ENCODE measurements at regions of chr11 and their contacts with region 1.

Region 1: GRCh38 chr11:447923-448731 is 2.0 kb upstream of the PTDSS2 start:
- DNase-seq: peak; percentile 94 to 97
- ATAC-seq: peak; percentile 87 to 92 (median 89)
- H3K4me3 ChIP-seq: peak overlapping the region; percentile 39 to 75 (median 64)
- H3K27ac ChIP-seq: peak overlapping the region; percentile 85 to 96 (median 91)
- H3K4me1 ChIP-seq: peaks cover 20 to 46% (median 34%) of the 10 kb centered on the region in 9 donors
- H3K27me3 ChIP-seq: peaks cover 0 to 3% (median 0%) of the 10 kb centered on the region in 7 donors
- CTCF ChIP-seq: peak; percentile 62 to 97 (median 84)

Region 2: GRCh38 chr11:313787-314547 is 134.2 kb before region 1 on chr11 and contains the start of gene IFITM1:
- intact Hi-C with region 1: no loop called
- DNase-seq: peak; percentile 22 to 65
- ATAC-seq: peak; percentile 5 to 51 (median 29)
- H3K4me3 ChIP-seq: peak within 1 kb of the TSS; percentile 55 to 85 (median 75)
- H3K27ac ChIP-seq: peak within 1 kb of the TSS; percentile 83 to 99 (median 94)
- H3K4me1 ChIP-seq: peaks cover 6 to 60% (median 40%) of the 10 kb centered on the region in 9 donors
- H3K27me3 ChIP-seq: peaks cover 0 to 25% (median 12%) of the 10 kb centered on the region in 7 donors
- CTCF ChIP-seq: no peak
- total RNA-seq, gene IFITM1: 51.6 to 182 (median 94.9) TPM

Region 3: DNA sequence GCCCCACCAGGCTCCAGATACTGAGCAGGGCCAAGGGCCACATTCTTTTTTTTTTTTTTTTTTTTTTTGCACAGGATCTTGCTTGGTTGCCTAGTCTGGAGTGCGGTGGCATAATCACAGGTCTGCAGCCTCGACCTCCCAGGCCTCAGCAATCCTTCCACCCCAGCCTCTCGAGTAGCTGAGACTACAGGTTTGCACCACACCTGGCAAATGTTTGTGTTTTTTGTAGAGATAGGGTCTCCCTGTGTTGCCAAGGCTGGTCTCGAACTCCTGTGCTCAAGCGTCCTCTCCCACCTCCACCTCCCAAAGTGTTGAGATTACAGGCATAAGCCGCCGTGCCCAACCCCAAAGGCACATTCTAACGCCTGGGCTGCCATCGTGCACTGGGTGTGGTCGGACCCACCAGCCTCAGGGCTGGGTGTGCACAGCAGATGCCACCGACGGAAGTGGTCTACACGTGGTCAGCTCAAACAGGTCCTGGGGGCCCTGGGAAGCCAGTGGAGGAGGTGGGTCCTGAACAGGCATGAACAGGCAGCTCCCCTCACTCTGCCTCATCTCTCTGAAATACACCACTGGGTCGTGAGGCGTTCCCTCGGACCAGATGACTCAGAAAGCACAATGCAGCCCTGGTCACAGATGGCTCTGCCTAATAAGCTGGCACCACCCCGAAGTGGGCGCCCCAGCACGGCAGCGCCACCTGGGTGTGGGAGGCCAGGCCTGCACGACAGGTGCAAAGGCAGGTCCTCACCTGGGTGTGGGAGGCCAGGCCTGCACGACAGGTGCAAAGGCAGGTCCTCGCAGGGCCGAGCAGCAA is 84.0 kb before region 1 on chr11:
- intact Hi-C with region 1: loop called in 1 of 10 experiments (anchors 10 kb)
- DNase-seq: no peak
- ATAC-seq: peak in 4 of 8 donors; percentile 25 to 57 (median 38)
- H3K4me3 ChIP-seq: no peak overlapping the region
- H3K27ac ChIP-seq: no peak overlapping the region
- H3K4me1 ChIP-seq: peaks cover 0 to 10% (median 8%) of the 10 kb centered on the region in 9 donors
- H3K27me3 ChIP-seq: peaks cover 8 to 52% (median 50%) of the 10 kb centered on the region in 7 donors
- CTCF ChIP-seq: peak in 3 of 9 donors; percentile 4 to 39 (median 12)

Region 4: GRCh38 chr11:382081-382629 is 66.0 kb before region 1 on chr11:
- intact Hi-C with region 1: no loop called
- DNase-seq: no peak
- ATAC-seq: no peak
- H3K4me3 ChIP-seq: no peak overlapping the region
- H3K27ac ChIP-seq: no peak overlapping the region
- H3K4me1 ChIP-seq: no peaks in the 10 kb centered on the region
- H3K27me3 ChIP-seq: peaks cover 0 to 56% (median 8%) of the 10 kb centered on the region in 7 donors
- CTCF ChIP-seq: no peak

Region 5: DNA sequence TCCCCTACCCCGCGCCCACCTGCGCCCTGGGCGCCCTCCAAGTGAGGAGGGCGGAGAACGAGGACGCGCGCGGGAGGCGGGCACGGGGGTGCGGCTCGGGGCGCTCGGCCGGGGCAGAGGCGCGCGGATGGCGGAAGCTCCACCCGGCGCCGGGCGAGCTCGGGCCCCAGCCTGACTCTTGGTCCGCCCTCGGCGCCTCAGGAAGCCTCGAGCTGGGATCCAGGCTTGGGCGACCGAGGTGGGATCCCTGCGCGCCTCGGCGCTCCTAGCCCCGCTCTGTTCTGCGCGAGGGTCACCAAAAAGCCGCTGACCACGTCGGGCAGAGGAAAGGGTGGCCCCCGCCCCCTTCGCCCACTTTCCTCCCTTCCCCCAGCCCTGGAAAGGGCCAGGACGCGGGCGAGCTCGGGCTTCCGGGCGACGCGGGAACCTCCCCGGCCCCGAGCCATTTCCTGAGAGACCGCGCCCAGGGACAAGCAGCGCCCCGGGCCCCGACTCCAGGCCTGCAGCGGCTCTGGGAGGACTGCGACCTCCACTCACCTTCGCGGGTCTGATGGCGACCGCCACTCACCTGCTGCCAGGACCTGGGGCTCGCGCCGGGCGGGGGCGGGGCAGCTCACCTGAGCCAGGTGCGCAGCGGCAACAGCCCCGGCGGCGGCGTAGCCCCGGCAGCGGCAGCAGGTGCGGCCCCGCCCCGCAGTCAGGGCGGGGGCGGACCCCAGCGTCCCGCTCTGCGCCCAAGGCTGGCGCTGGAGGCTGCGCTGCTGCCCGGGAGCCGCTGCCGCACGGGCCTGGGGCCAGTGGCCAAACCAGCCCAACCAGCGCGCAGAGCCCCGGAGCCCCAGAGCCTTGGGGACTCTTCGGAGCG is 31.1 kb before region 1 on chr11:
- intact Hi-C with region 1: loop called in 1 of 10 experiments (anchors 2 kb)
- DNase-seq: peak; percentile 43 to 62
- ATAC-seq: peak; percentile 65 to 81 (median 68)
- H3K4me3 ChIP-seq: peak overlapping the region; percentile 43 to 69 (median 63)
- H3K27ac ChIP-seq: peak overlapping the region; percentile 87 to 97 (median 93)
- H3K4me1 ChIP-seq: peaks cover 0 to 36% (median 12%) of the 10 kb centered on the region in 9 donors
- H3K27me3 ChIP-seq: peaks cover 9 to 65% (median 48%) of the 10 kb centered on the region in 7 donors
- CTCF ChIP-seq: no peak

Region 6: GRCh38 chr11:506238-506994 is 58.3 kb after region 1 on chr11:
- intact Hi-C with region 1: loop called in 7 of 10 experiments (anchors 1 to 10 kb)
- DNase-seq: peak; percentile 98 to 100
- ATAC-seq: peak; percentile 80 to 92 (median 90)
- H3K4me3 ChIP-seq: peak overlapping the region; percentile 71 to 98 (median 85)
- H3K27ac ChIP-seq: peak overlapping the region; percentile 95 to 100 (median 99)
- H3K4me1 ChIP-seq: peaks cover 24 to 58% (median 51%) of the 10 kb centered on the region in 9 donors
- H3K27me3 ChIP-seq: no peaks in the 10 kb centered on the region
- CTCF ChIP-seq: peak in 1 of 9 donors; percentile 23

Measured in heart right ventricle (tissue), 16 donors.